ENCODE measurements at regions of chr12 and their contacts with region 1.

Region 1: DNA sequence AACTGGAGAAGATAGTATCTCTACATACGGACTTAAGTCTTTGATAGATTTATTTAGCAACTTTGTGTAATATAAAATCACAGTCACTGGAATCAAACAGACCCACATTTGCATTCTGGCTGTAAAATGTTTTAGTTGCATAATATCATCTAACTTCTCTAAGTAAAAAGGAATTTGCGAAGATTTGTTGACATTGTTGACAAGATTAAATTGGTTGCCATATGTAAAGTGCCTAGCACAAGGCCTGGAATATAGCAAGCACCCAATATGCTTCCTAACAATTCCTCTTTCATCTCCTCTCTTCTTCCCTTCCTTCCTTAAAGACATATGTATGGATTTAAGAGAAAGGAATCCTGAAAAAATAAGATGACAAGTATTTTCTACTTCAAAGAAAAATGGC is 295.4 kb upstream of the PPFIA2 start:
- DNase-seq: no peak
- H3K4me3 ChIP-seq: no peak overlapping the region
- CTCF ChIP-seq: no peak
- POLR2A ChIP-seq: no peak

Region 2: GRCh38 chr12:82203076-82203475 is 148.5 kb after region 1 on chr12:
- intact Hi-C with region 1: no loop called
- DNase-seq: no peak
- H3K4me3 ChIP-seq: no peak overlapping the region
- CTCF ChIP-seq: no peak
- POLR2A ChIP-seq: no peak

Region 3: GRCh38 chr12:82299319-82300025 is 244.9 kb after region 1 on chr12:
- intact Hi-C with region 1: loop called (anchors 5 kb)
- DNase-seq: no peak
- H3K4me3 ChIP-seq: no peak overlapping the region
- CTCF ChIP-seq: no peak
- POLR2A ChIP-seq: no peak

Measured in lower leg skin (tissue), 4 donors.